Dorsolateral prefrontal cortex (tissue), 120 donors: ENCODE measurements at regions of chr6 and their contacts with region 1.

Region 1: GRCh38 chr6:74273541-74273940 is 577.5 kb downstream of the CD109 start:
- DNase-seq: no peak
- H3K4me3 ChIP-seq: no peak overlapping the region
- H3K27ac ChIP-seq: no peak overlapping the region
- H3K27me3 ChIP-seq: no peaks in the 10 kb centered on the region
- CTCF ChIP-seq: no peak

Region 2: DNA sequence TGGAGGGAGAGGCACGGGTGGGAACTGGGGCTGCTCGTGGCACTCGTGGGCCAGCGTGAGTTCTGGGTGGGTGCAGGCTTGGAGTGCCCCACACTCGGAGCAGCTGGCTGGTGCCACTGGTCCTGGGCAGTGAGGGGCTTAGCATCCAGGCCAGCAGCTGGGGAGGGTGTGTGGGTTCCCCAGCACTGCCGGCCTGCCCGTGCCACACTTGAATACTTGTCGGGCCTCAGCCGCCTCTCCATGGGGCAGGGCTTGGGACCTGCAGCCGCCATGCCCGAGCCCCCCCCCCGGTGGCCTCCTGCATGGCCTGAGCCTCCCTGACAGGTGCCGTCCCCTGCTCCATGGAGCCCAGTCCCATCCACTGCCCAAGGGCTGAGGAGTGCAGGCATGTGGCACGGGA is 370.4 kb before region 1 on chr6:
- intact Hi-C with region 1: loop called in 1 of 2 experiments (anchors 5 kb)
- DNase-seq: no peak
- H3K4me3 ChIP-seq: no peak overlapping the region
- H3K27ac ChIP-seq: no peak overlapping the region
- H3K27me3 ChIP-seq: peaks cover 0 to 5% (median 0%) of the 10 kb centered on the region in 45 donors
- CTCF ChIP-seq: no peak

Region 3: DNA sequence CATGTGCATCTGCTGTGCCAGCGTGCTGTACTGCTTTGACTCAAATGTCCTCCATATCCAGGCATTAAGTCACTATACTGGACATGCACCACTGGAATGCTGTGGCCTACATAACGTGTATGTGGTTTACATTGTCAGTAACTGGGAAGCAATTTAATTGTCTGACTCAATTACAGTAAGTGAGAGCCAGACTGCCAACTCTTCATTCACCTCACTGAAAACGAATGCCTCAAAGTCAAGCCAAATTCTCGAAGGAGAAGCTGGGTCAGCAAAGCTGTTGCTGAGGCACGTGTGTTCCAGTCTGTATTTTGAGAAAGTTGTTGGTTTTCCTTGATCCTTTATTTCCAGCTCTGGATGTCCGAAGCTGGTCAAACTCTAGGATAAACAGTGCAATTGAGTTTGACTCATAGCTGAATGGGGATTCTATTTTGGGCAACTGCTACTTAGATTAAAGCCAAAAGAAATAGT is 398.1 kb after region 1 on chr6:
- intact Hi-C with region 1: no loop called
- DNase-seq: no peak
- H3K4me3 ChIP-seq: no peak overlapping the region
- H3K27ac ChIP-seq: no peak overlapping the region
- H3K27me3 ChIP-seq: no peaks in the 10 kb centered on the region
- CTCF ChIP-seq: no peak